ENCODE measurements at regions of chr10 and their contacts with region 1.

Region 1: DNA sequence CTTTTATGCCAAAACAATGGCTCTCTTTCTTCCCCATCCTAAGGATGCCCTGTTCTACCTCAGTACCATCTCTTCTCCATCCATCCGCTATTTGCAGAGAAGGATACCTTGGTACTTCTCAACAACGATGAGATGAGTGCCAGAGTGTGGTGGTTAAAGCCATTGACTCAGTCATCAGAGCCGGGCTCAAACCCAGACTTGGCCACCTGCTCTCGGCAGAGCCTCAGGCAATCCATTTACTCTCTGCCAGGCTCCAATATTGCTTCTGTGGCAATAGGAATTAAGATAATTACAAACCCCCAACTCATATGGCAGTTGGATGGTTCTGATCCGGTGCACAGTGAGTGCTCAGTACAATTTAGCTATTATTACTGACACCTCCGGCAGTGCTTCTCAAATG is 121.3 kb downstream of the PRLHR start:
- DNase-seq: no peak
- H3K4me3 Mint-ChIP-seq: no peak overlapping the region
- H3K27ac Mint-ChIP-seq: no peak overlapping the region
- H3K4me1 Mint-ChIP-seq: no peaks in the 10 kb centered on the region
- H3K27me3 Mint-ChIP-seq: peaks cover 5% of the 10 kb centered on the region

Region 2: DNA sequence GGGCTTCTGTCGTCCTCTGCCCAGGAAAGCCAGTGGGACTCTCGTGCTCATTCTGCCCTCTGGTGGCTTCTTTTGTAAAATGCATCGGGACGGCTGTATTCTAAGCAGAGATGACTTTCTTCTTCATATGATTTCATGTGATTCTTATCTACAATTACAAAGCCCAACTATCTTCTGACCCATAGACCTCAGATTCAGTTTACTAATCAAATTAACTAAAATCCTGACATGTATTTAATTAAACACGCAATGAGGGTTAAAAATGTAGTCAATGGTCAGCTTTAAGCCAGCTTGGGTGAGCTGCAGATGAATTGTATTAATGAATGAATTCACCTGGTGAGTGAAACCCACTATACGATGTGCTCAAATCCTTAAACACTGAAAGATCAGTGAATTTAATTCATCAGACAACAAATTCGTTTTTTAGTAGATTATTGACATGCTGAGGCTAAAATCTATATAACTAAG is 14.4 kb before region 1 on chr10:
- CTCF ChIA-PET with region 1: interaction called, 14 read pairs
- POLR2A ChIA-PET with region 1: no interaction called
- DNase-seq: peak; percentile 54
- H3K4me3 Mint-ChIP-seq: no peak overlapping the region
- H3K27ac Mint-ChIP-seq: no peak overlapping the region
- H3K4me1 Mint-ChIP-seq: no peaks in the 10 kb centered on the region
- H3K27me3 Mint-ChIP-seq: peaks cover 20% of the 10 kb centered on the region